Motor neuron (in vitro differentiated cells): ENCODE measurements at regions of chr1 and their contacts with region 1.

Region 1: GRCh38 chr1:218345673-218346390 is 696 bp downstream of the TGFB2 start:
- ATAC-seq: peak; percentile 59 to 85 (median 81)
- H3K4me3 ChIP-seq: peak overlapping the region; percentile 49 to 62 (median 50)
- H3K27ac ChIP-seq: peak overlapping the region; percentile 35 to 51
- H3K4me1 ChIP-seq: peaks cover 5 to 14% of the 10 kb centered on the region in 2 donors

Region 2: GRCh38 chr1:217363087-217363718 is 982.6 kb before region 1 on chr1:
- in situ Hi-C with region 1: no loop called
- ATAC-seq: no peak
- H3K4me3 ChIP-seq: no peak overlapping the region
- H3K27ac ChIP-seq: no peak overlapping the region
- H3K4me1 ChIP-seq: no peaks in the 10 kb centered on the region

Region 3: DNA sequence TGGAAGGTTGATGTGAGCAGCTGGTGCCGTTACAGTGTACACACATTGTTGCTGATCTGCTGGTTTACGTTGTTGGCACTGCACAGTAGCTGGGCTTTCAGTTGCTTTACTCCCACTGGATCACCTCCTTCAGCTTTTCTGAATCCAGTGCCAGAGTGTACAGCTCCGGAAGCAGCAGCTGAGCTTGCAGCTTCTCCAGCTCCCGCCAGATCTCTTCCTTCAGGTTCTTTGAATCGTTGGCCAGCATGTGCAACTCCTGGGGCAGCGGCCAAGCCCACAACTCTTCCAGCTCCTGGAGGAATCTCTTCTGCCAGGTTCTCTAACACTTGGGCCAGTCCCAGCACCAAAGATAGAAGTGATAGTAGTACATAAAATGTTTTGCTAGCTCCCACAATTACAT is 210.5 kb before region 1 on chr1:
- in situ Hi-C with region 1: no loop called
- ATAC-seq: no peak
- H3K4me3 ChIP-seq: no peak overlapping the region
- H3K27ac ChIP-seq: no peak overlapping the region
- H3K4me1 ChIP-seq: no peaks in the 10 kb centered on the region

Region 4: DNA sequence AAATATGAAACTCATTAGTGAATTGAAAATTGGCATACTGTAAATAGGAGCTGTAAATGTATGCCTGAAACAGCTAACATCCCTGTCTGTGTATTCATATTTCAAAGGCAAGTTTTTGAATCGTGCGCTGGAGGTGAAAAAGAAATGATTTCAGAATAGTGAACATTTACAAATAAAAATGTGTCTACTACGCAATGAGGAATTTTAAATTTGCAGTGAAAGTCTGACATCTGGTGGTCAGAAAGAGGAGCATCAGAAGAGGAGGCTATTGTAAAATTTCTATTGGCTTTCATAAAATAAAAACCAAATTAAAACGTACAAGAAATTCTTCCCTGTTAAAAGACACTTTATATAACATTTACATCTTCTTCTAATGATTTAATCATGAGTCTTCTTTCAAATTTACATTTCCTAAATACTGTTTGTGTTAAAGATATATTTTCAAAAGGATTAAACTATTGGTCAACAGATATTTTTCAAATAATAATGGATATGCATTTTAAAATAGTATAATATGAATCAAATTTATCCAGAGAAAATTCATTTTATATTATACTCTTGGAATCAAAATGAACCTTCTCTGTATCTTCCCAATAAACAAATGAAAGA is 174.4 kb before region 1 on chr1:
- in situ Hi-C with region 1: no loop called
- ATAC-seq: peak in 4 of 8 experiments; percentile 40 to 52 (median 43)
- H3K4me3 ChIP-seq: no peak overlapping the region
- H3K27ac ChIP-seq: no peak overlapping the region
- H3K4me1 ChIP-seq: peaks cover 2 to 30% of the 10 kb centered on the region in 2 donors

Region 5: DNA sequence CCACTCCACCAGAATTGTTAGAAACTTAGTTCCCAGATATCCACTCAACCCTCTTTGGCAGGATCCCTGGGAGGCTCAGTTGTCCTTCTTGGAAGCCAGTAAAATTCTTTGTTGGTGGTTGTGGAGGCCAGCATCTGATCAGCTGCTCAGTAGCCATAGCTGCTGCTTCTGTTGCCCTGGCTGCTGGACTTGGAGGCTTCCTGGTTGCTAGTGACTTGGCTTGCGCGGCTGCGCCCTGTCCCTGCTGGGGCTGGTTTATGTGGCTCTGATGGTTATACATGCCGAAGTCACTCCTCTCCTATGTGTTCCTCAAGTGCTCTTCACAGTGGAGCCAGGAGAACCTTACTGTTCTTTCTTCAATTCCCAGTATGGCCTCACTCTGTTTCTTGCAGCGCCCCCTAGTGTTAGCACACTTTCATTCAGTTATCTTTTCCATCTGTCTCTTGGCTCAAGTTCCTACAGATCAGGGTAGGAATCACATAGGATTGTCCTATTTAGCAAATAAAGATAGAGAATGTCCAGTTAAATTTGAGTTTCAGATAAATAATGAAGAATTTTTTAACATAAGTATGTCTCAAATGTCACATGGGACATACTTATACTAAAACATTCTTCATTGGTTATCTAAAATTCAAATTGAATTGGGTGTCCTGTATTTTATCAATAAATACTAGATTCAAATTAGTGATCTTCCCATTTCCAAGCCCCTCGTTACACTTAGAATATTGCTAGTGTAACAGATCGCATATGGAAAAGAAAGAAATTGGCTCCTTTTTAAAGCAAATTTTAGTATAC is 175.7 kb after region 1 on chr1:
- in situ Hi-C with region 1: loop called in 3 of 9 experiments (anchors 10 to 25 kb)
- ATAC-seq: peak in 3 of 8 experiments; percentile 57 to 74 (median 66)
- H3K4me3 ChIP-seq: no peak overlapping the region
- H3K27ac ChIP-seq: no peak overlapping the region
- H3K4me1 ChIP-seq: no peaks in the 10 kb centered on the region

Region 6: DNA sequence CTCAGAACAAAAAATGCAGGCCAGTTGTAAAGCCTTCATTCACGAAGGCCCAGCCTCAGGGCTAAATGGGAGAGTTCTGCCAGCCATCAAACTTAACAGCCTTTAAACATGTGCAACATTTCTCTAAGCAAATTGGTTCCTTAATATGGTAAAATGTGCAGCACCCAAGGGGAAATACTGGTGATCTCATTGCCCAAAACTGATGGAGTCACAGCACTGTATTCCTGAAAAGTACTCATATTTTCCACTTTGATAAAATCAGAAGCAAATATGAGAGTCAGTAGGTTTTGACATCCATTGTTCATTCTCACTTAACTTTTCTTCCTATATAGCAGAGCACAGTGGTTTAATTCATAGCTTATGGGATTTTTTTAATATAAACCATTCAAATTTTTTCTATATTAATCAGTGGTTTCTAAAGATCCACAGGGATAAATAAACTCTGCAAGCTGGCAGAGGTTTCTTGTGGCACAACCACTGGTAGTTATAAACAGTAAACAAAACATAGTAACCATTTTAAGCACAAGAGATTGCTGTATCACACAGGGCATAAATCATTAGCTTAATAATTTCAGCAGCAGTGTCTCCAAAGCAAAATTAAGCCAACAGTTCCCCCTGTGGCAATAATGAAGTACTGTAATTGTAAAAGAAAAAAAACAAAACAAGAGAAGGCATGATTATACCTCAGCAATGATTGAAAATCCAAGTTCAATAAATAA is 721.0 kb after region 1 on chr1:
- in situ Hi-C with region 1: loop called in 3 of 9 experiments (anchors 25 kb)
- ATAC-seq: peak; percentile 36 to 94 (median 47)
- H3K4me3 ChIP-seq: no peak overlapping the region
- H3K27ac ChIP-seq: no peak overlapping the region
- H3K4me1 ChIP-seq: peaks cover 0 to 11% of the 10 kb centered on the region in 2 donors

Region 7: DNA sequence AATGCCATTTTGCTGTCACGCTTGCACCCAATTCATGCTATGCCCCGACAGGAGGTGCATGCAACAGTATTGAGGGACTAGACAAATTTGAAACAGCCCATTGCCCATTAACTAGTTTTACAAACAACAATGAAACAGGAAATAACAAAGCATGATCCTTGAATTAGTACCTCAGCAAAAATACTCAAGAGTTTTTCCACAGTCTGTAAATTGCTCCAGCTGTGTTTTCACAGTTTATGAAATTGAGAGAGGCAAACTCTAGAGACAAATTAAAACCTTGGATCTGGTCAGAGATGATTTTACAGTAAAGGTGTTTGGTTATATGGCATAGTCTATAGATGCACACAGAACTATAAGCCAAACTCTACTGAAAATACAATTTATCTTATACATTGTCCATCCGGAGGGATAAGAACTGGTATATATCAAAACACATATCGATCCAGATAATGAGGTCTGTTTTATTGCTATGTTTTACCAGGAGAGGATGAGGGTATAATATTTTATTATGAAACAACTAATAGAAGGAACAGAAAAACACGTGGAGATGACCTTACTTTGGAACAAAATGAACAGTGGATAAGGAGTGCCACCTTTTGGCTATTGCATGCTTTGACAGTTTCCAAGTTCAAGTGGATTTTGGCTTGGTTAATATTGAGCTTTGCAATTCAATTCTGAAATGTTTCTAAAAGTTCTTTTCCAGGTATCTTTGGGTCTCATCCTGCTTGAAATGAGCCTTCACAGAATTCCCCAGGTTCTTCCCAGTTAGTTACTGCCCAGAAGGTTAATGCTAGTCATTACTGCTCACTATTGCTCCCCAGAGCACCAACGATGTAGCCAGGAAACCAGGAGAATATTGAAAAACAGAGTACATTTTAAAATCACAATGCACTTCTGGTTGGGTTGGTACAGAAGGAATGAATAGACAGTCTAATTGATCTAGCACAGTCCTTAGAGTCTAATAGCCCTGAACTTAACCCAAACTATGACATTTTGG is 1221.4 kb after region 1 on chr1:
- in situ Hi-C with region 1: loop called in 8 of 9 experiments (anchors 25 kb)
- ATAC-seq: peak in 6 of 8 experiments; percentile 36 to 76 (median 55)
- H3K4me3 ChIP-seq: no peak overlapping the region
- H3K27ac ChIP-seq: no peak overlapping the region
- H3K4me1 ChIP-seq: peaks cover 2 to 4% of the 10 kb centered on the region in 2 donors

Region 8: GRCh38 chr1:219812491-219813203 is 1466.8 kb after region 1 on chr1:
- in situ Hi-C with region 1: loop called in 6 of 9 experiments (anchors 25 kb)
- ATAC-seq: peak; percentile 74 to 98 (median 95)
- H3K4me3 ChIP-seq: no peak overlapping the region
- H3K27ac ChIP-seq: no peak overlapping the region
- H3K4me1 ChIP-seq: peaks cover 4 to 10% of the 10 kb centered on the region in 2 donors